Aorta (tissue), 5 donors: ENCODE measurements at regions of chr3 and their contacts with region 1.

Region 1: GRCh38 chr3:67605377-67605776 is 49.0 kb downstream of the SUCLG2 start:
- DNase-seq: no peak
- ATAC-seq: peak; percentile 44
- H3K4me3 ChIP-seq: no peak overlapping the region
- H3K27ac ChIP-seq: no peak overlapping the region
- H3K4me1 ChIP-seq: peaks cover 0 to 3% of the 10 kb centered on the region in 2 donors
- H3K27me3 ChIP-seq: no peaks in the 10 kb centered on the region

Region 2: DNA sequence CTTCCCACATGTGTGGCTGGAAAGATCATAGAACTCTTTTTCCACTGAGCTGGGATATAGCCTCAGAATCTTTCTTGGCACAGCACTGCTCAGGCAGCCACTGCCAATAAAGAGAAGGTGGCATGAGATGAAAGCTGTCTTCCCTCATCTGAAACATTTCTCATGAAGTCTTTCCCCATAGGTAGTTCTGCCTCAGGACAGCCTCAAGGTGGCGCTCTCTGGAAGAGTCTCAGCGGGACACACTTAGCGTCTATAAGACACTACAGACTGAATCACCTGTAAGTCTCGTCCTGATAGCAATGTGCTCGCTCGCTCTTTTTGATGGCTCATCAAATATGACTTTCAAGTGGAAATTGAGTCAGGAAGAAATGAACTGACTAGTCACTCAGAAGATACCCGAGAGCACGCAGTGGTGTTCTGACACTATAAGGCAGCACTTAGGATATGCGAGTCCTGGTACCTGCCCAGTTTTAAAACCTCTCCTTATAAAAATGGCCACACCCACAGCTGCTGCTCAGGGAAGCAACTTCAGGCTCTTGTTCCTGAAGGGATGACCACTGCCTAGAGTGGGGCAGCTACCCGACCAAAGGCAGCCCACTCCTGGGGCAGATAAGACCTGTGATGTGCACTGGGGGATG is 220.5 kb before region 1 on chr3:
- intact Hi-C with region 1: loop called (anchors 5 to 10 kb)
- DNase-seq: no peak
- ATAC-seq: no peak
- H3K4me3 ChIP-seq: no peak overlapping the region
- H3K27ac ChIP-seq: no peak overlapping the region
- H3K4me1 ChIP-seq: peaks cover 6 to 13% of the 10 kb centered on the region in 2 donors
- H3K27me3 ChIP-seq: no peaks in the 10 kb centered on the region

Region 3: GRCh38 chr3:67401921-67402320 is 203.5 kb before region 1 on chr3:
- intact Hi-C with region 1: no loop called
- DNase-seq: no peak
- ATAC-seq: no peak
- H3K4me3 ChIP-seq: no peak overlapping the region
- H3K27ac ChIP-seq: no peak overlapping the region
- H3K4me1 ChIP-seq: no peaks in the 10 kb centered on the region
- H3K27me3 ChIP-seq: no peaks in the 10 kb centered on the region

Region 4: GRCh38 chr3:67415511-67415910 is 189.9 kb before region 1 on chr3:
- intact Hi-C with region 1: no loop called
- DNase-seq: no peak
- ATAC-seq: no peak
- H3K4me3 ChIP-seq: no peak overlapping the region
- H3K27ac ChIP-seq: no peak overlapping the region
- H3K4me1 ChIP-seq: no peaks in the 10 kb centered on the region
- H3K27me3 ChIP-seq: no peaks in the 10 kb centered on the region

Region 5: GRCh38 chr3:67489816-67490215 is 115.6 kb before region 1 on chr3:
- intact Hi-C with region 1: loop called in 1 of 2 experiments (anchors 10 kb)
- DNase-seq: no peak
- ATAC-seq: no peak
- H3K4me3 ChIP-seq: peak overlapping the region in 1 of 2 donors; percentile 34
- H3K27ac ChIP-seq: no peak overlapping the region
- H3K4me1 ChIP-seq: peaks cover 0 to 9% of the 10 kb centered on the region in 2 donors
- H3K27me3 ChIP-seq: no peaks in the 10 kb centered on the region

Region 6: DNA sequence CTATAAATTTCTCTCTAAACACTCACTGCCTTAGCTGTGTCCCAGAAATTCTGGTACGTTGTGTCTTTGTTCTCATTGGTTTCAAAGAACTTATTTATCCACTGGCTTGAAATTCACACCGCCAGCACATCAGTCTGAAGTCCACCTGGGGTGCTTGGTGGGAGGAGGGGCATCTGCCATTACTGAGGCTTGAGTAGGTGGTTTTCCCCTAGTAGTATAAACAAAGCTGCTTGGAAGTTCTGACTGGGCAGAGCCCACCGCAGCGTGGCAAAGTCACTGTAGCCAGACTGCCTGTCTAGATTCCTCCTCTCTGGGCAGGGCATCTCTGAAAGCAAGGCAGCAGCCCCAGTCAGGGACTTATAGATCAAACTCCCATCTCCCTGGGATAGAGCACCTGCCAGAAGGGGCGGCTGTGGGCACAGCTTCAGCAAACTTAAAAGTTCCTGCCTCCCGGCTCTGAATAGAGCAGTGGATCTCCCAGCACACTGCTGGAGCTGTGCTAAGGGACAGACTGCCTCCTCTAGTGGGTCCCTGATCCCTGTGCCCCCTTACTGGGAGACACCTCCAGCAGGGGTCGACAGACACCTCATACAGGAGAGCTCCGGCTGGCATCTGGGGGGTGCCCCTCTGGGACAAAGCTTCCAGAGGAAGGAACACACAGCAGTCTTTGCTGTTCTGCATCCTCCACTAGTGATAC is 65.0 kb before region 1 on chr3:
- intact Hi-C with region 1: no loop called
- DNase-seq: no peak
- ATAC-seq: no peak
- H3K4me3 ChIP-seq: no peak overlapping the region
- H3K27ac ChIP-seq: no peak overlapping the region
- H3K4me1 ChIP-seq: no peaks in the 10 kb centered on the region
- H3K27me3 ChIP-seq: no peaks in the 10 kb centered on the region